ENCODE measurements at regions of chr1 and their contacts with region 1.

Region 1: GRCh38 chr1:1432951-1433803 is 2.3 kb upstream of the VWA1 start:
- DNase-seq: no peak
- ATAC-seq: peak; percentile 68
- H3K4me3 ChIP-seq: peak overlapping the region; percentile 80 to 92
- H3K27ac ChIP-seq: peak overlapping the region; percentile 99
- H3K4me1 ChIP-seq: peaks cover 45 to 67% of the 10 kb centered on the region in 2 experiments
- H3K27me3 ChIP-seq: no peaks in the 10 kb centered on the region
- CTCF ChIP-seq: no peak
- POLR2A ChIP-seq: no peak
- RAD21 ChIP-seq: no peak

Region 2: DNA sequence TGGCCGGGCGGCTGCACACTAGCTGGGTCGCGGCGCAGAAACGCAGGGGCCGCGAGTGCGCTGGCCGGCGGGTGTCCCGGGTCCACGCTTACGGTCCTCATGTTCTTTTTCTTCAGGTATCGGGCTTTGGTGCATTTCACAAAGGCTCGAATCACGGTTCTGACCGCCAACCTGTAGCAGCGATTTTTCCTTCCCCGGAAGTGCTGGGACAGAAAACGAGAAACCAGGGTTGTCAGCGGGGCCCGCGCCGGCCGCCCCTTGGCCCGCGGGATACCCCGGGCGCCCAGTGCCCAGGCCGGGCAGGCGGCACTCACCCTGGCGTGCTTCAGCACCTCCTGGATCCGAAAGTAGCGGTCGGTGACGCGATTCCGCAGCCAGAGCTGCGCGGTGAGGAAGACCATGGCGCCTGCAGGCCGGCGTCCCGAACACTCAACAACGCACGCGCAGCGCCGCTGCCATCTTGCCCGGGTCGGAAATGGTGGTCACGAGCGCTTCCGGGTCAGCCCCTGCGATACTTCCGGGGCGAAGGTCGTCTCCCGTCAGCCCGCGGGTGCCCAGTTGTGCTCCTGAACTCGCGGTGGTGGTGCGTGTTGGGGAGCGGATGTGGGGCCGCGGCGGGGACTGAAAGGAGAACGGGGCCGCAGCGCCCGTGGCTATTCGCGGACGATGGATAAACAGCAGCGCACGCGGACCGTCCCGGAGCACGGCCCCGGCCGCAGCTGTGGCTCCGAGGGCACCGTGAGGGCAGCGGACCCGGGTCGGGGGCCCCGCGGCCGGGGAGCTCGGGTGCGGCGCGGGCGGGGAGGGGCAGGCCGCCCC is 26.2 kb before region 1 on chr1 and contains the start of gene MRPL20:
- CTCF ChIA-PET with region 1: interaction called, 3 read pairs
- POLR2A ChIA-PET with region 1: interaction called, 3 read pairs
- RAD21 ChIA-PET with region 1: interaction called in 1 of 2 experiments, 3 read pairs
- intact Hi-C with region 1: loop called (anchors 2 kb)
- DNase-seq: peak; percentile 73
- ATAC-seq: peak; percentile 86
- H3K4me3 ChIP-seq: peak within 1 kb of the TSS; percentile 88 to 92
- H3K27ac ChIP-seq: peak within 1 kb of the TSS; percentile 99
- H3K4me1 ChIP-seq: peaks cover 17 to 32% of the 10 kb centered on the region in 2 experiments
- H3K27me3 ChIP-seq: no peaks in the 10 kb centered on the region
- CTCF ChIP-seq: no peak
- POLR2A ChIP-seq: peak; percentile 90
- RAD21 ChIP-seq: no peak
- total RNA-seq, gene MRPL20: 131 TPM

Region 3: DNA sequence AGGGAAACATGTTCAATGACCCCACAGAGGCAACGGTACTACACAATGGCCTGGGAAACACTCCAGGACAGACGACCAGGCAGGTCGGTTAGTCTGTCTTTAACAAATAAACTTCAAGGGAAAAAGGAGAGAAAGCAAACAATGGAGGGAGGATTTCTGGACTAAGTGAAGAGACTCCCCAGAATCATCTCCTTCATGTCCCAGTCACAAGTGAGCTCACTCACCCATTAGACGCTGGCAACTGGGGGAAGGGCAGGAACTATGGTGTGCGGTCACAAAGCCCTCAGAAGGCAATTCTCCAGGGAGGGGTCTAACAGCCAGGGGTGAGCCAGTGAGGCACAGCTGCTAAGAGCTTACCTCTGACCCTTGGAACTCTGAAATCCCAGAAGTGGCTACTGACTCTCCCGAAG is 400.7 kb after region 1 on chr1:
- CTCF ChIA-PET with region 1: no interaction called
- POLR2A ChIA-PET with region 1: no interaction called
- RAD21 ChIA-PET with region 1: no interaction called
- intact Hi-C with region 1: no loop called
- DNase-seq: no peak
- ATAC-seq: no peak
- H3K4me3 ChIP-seq: no peak overlapping the region
- H3K27ac ChIP-seq: no peak overlapping the region
- H3K4me1 ChIP-seq: no peaks in the 10 kb centered on the region
- H3K27me3 ChIP-seq: no peaks in the 10 kb centered on the region
- CTCF ChIP-seq: no peak
- POLR2A ChIP-seq: no peak
- RAD21 ChIP-seq: no peak